CD4-positive, alpha-beta T cell (primary cell): ENCODE measurements at regions of chr17 and their contacts with region 1.

Region 1: DNA sequence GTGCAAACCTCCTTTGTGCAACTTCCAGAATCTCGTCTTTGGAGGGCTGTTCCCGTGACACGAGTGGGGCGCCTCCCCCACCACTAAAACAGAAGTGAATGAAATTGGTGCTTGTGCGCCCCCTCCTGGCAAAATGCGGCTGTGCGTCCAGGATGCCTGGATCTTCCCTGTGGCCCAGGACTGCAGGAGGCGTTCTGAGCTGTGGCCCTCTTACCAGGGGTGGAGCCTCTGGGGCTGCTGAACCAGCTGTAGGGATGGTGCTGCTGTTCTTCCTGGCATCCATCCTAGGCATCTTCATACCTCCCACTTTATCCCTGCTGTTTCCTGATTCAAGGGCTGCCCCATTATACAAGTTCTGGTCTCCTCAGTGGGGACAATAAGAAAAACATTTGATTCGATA is 18.5 kb upstream of the NAGLU start:
- DNase-seq: peak; percentile 69 to 90 (median 79)
- ATAC-seq: peak; percentile 93
- H3K4me3 ChIP-seq: no peak overlapping the region
- H3K4me3 Mint-ChIP-seq: no peak overlapping the region
- H3K27ac ChIP-seq: no peak overlapping the region
- H3K27ac Mint-ChIP-seq: no peak overlapping the region
- H3K4me1 ChIP-seq: peaks cover 6% of the 10 kb centered on the region
- H3K4me1 Mint-ChIP-seq: peaks cover 8% of the 10 kb centered on the region
- H3K27me3 ChIP-seq: no peaks in the 10 kb centered on the region
- H3K27me3 Mint-ChIP-seq: no peaks in the 10 kb centered on the region
- CTCF ChIP-seq: peak; percentile 97

Region 2: GRCh38 chr17:42322382-42323267 is 194.9 kb before region 1 on chr17:
- CTCF ChIA-PET with region 1: interaction called, 3 read pairs
- POLR2A ChIA-PET with region 1: no interaction called
- intact Hi-C with region 1: loop called (anchors 1 to 2 kb)
- DNase-seq: peak; percentile 89 to 98 (median 95)
- ATAC-seq: peak; percentile 97
- H3K4me3 ChIP-seq: no peak overlapping the region
- H3K4me3 Mint-ChIP-seq: no peak overlapping the region
- H3K27ac ChIP-seq: peak overlapping the region in 1 of 2 donors; percentile 18
- H3K27ac Mint-ChIP-seq: peak overlapping the region; percentile 76
- H3K4me1 ChIP-seq: peaks cover 26% of the 10 kb centered on the region
- H3K4me1 Mint-ChIP-seq: peaks cover 37% of the 10 kb centered on the region
- H3K27me3 ChIP-seq: no peaks in the 10 kb centered on the region
- H3K27me3 Mint-ChIP-seq: no peaks in the 10 kb centered on the region
- CTCF ChIP-seq: peak; percentile 100

Region 3: GRCh38 chr17:42405963-42406495 is 111.5 kb before region 1 on chr17:
- CTCF ChIA-PET with region 1: interaction called, 5 read pairs
- POLR2A ChIA-PET with region 1: no interaction called
- intact Hi-C with region 1: loop called in 1 of 2 experiments (anchors 5 kb)
- DNase-seq: peak; percentile 70 to 90 (median 82)
- ATAC-seq: peak; percentile 88
- H3K4me3 ChIP-seq: no peak overlapping the region
- H3K4me3 Mint-ChIP-seq: no peak overlapping the region
- H3K27ac ChIP-seq: no peak overlapping the region
- H3K27ac Mint-ChIP-seq: no peak overlapping the region
- H3K4me1 ChIP-seq: peaks cover 13% of the 10 kb centered on the region
- H3K4me1 Mint-ChIP-seq: peaks cover 11% of the 10 kb centered on the region
- H3K27me3 ChIP-seq: no peaks in the 10 kb centered on the region
- H3K27me3 Mint-ChIP-seq: no peaks in the 10 kb centered on the region
- CTCF ChIP-seq: peak; percentile 76

Region 4: DNA sequence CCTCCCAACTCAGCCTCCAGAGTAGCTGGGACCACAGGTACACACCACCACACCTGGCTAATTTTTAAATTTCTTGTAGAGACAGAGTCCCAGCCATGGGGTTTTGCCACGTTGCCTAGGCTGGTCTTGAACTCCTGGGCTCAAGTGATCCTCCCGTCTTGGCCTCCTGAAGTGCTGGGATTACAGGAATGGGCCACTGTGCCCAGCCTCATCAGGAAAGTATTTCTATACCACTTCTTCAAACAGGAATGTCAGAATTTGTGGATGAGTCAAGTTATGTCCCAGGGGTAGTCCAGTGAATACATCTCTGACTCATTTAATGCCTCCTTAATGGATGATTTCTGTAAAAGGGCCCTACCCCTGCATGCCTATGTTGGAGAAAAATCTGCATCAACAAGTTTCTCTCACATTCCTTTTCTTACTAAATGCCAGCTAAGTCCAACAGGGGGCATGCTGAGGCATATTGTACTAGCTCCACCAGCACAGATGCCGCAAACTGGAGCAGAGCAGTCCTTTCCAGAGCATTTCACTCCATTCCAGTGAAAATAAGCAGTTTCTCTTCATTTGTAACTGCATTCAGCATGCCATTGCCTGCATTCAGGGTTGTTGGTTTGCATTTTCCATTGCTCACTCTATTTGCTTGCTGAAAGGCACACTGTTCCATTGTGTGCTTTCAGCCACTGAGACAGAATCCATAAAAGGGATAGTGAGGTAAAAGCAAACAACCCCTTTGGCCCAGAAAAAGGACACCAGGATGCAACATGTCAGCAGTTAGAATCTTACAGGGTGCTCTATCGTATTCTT is 89.2 kb before region 1 on chr17:
- CTCF ChIA-PET with region 1: interaction called, 18 read pairs
- POLR2A ChIA-PET with region 1: interaction called, 3 read pairs
- intact Hi-C with region 1: loop called (anchors 1 kb)
- DNase-seq: peak in 12 of 14 experiments; percentile 17 to 75 (median 32)
- ATAC-seq: peak; percentile 80
- H3K4me3 ChIP-seq: no peak overlapping the region
- H3K4me3 Mint-ChIP-seq: no peak overlapping the region
- H3K27ac ChIP-seq: no peak overlapping the region
- H3K27ac Mint-ChIP-seq: no peak overlapping the region
- H3K4me1 ChIP-seq: peaks cover 5% of the 10 kb centered on the region
- H3K4me1 Mint-ChIP-seq: peaks cover 1% of the 10 kb centered on the region
- H3K27me3 ChIP-seq: peaks cover 8 to 11% of the 10 kb centered on the region in 2 experiments
- H3K27me3 Mint-ChIP-seq: peaks cover 32% of the 10 kb centered on the region
- CTCF ChIP-seq: peak; percentile 71